ENCODE measurements at regions of chr17 and their contacts with region 1.

Region 1: GRCh38 chr17:64129764-64130558 is at the start of gene ERN1:
- DNase-seq: peak; percentile 89
- H3K4me3 Mint-ChIP-seq: peak within 1 kb of the TSS; percentile 92
- H3K27ac Mint-ChIP-seq: peak within 1 kb of the TSS; percentile 92
- H3K4me1 Mint-ChIP-seq: peaks cover 53% of the 10 kb centered on the region
- H3K27me3 Mint-ChIP-seq: no peaks in the 10 kb centered on the region
- total RNA-seq, gene ERN1: 50.1 to 57.5 TPM

Region 2: GRCh38 chr17:63911657-63912426 is 218.1 kb before region 1 on chr17:
- CTCF ChIA-PET with region 1: interaction called, 15 read pairs
- POLR2A ChIA-PET with region 1: no interaction called
- DNase-seq: peak; percentile 68
- H3K4me3 Mint-ChIP-seq: no peak overlapping the region
- H3K27ac Mint-ChIP-seq: no peak overlapping the region
- H3K4me1 Mint-ChIP-seq: peaks cover 3% of the 10 kb centered on the region
- H3K27me3 Mint-ChIP-seq: peaks cover 12% of the 10 kb centered on the region

Region 3: DNA sequence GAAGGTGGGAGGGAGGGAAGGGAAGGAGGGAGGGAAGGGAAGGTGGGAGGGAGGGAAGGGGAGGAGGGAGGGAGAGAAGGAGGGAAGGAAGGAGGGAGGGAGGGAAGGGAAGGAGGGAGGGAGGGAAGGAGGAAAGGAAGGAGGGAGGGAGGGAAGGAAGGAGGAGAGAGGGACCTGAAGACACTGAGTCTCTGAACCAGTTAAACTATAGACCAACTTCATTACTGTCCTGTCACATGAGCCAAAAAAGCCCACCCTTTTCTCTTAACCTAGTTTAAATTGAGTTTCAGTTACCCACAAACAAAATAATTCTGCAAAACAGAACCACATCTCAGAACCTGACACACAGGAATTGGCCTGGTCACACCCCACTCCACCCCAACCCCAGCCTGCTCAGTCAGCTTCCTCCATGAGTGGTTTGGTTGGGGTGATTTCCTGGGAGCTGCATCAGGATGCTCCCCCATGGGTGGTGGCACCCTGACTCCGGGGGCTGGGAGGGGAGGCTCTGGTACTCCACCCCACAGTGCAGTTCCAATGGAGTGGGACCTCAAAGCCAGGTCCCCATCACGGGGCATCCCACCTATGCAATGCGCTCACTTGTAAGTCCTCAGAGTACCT is 136.5 kb before region 1 on chr17:
- CTCF ChIA-PET with region 1: interaction called, 10 read pairs
- POLR2A ChIA-PET with region 1: no interaction called
- DNase-seq: peak; percentile 41
- H3K4me3 Mint-ChIP-seq: no peak overlapping the region
- H3K27ac Mint-ChIP-seq: peak overlapping the region; percentile 85
- H3K4me1 Mint-ChIP-seq: peaks cover 75% of the 10 kb centered on the region
- H3K27me3 Mint-ChIP-seq: peaks cover 19% of the 10 kb centered on the region

Region 4: DNA sequence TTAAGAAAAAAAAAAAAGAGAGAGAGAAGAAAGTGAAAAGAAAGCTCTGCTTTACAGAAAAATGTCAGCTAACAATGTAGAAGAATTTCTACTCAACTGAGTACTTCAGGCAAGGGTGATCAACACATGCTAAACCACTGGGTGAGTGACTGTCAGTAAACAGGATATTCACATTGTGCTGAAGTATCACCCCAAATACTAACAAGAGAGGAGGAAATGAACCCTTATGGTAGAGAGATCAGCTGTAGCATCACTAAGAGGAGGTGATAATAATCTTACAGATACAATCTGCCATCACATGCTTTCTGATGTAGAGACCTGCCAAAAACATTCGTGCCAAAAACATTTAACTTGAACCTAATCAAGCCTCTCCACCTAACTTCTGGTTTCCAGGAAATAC is 78.8 kb before region 1 on chr17:
- CTCF ChIA-PET with region 1: interaction called, 17 read pairs
- POLR2A ChIA-PET with region 1: interaction called, 3 read pairs
- DNase-seq: peak; percentile 61
- H3K4me3 Mint-ChIP-seq: peak overlapping the region; percentile 52
- H3K27ac Mint-ChIP-seq: peak overlapping the region; percentile 93
- H3K4me1 Mint-ChIP-seq: peaks cover 52% of the 10 kb centered on the region
- H3K27me3 Mint-ChIP-seq: no peaks in the 10 kb centered on the region

Region 5: GRCh38 chr17:64145757-64146417 is 15.9 kb after region 1 on chr17:
- CTCF ChIA-PET with region 1: interaction called, 13 read pairs
- POLR2A ChIA-PET with region 1: interaction called, 8 read pairs
- DNase-seq: peak; percentile 98
- H3K4me3 Mint-ChIP-seq: no peak overlapping the region
- H3K27ac Mint-ChIP-seq: no peak overlapping the region
- H3K4me1 Mint-ChIP-seq: peaks cover 30% of the 10 kb centered on the region
- H3K27me3 Mint-ChIP-seq: no peaks in the 10 kb centered on the region

Measured in activated CD4-positive, alpha-beta T cell treated with anti-CD3 and anti-CD28 coated beads, Interleukin-2, amount 10 ng/mL, durations not matched to agents 7 days and 5 days (primary cell).